ENCODE measurements at regions of chr1 and their contacts with region 1.

Region 1: GRCh38 chr1:119675349-119676345 is 27.6 kb upstream of the ZNF697 start:
- DNase-seq: peak; percentile 89
- ATAC-seq: peak; percentile 72
- H3K4me3 Mint-ChIP-seq: peak overlapping the region; percentile 52
- H3K27ac Mint-ChIP-seq: no peak overlapping the region
- H3K4me1 Mint-ChIP-seq: peaks cover 4% of the 10 kb centered on the region
- H3K27me3 Mint-ChIP-seq: peaks cover 4% of the 10 kb centered on the region
- CTCF ChIP-seq: peak; percentile 78

Region 2: DNA sequence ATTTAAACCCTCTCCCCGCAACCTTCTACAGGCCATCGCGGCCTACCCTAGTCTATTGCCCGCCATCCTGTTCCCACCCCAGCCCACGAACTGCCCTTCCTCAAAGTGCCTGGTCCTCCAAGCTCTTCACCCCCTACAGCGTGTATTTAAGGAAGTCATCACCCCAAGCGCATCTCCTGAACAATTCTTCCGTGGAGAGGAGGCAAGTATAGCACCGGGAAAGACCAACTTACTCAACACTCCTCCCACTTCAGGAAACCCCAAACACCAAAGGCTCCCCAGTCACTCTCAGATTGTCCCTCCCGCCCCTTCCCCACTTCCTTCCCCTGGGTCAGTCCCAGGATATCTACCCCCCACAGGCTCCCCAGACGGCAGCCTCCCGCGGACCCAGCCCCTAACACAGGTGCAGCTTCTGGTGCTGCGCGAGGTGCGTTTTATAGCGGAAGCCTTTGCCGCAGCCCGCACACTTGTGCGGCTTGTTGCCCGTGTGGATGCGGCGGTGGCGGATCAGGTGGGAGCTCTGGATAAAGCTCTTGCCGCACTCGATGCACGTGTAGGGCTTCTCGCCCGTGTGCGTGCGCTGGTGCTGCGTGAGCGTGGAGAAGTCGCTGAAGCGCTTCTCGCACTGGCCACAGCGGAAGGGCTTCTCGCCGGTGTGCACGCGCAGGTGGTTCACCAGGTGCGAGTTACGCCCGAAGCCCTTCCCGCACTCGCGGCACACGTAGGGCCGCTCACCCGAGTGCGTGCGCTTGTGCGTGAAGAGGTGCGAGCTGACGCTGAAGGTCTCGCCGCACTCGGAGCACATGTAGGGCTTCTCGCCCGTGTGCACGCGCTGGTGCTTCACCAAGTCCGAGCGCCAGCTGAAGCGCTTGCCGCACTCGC is 53.1 kb before region 1 on chr1:
- CTCF ChIA-PET with region 1: interaction called, 250 read pairs
- POLR2A ChIA-PET with region 1: no interaction called
- intact Hi-C with region 1: no loop called
- DNase-seq: no peak
- ATAC-seq: no peak
- H3K4me3 Mint-ChIP-seq: no peak overlapping the region
- H3K27ac Mint-ChIP-seq: no peak overlapping the region
- H3K4me1 Mint-ChIP-seq: no peaks in the 10 kb centered on the region
- H3K27me3 Mint-ChIP-seq: peaks cover 5% of the 10 kb centered on the region
- CTCF ChIP-seq: no peak

Region 3: GRCh38 chr1:119647734-119648619 is 27.7 kb before region 1 on chr1 and contains the start of gene ZNF697:
- CTCF ChIA-PET with region 1: interaction called, 23 read pairs
- POLR2A ChIA-PET with region 1: no interaction called
- intact Hi-C with region 1: no loop called
- DNase-seq: peak; percentile 43
- ATAC-seq: peak; percentile 79
- H3K4me3 Mint-ChIP-seq: peak within 1 kb of the TSS; percentile 70
- H3K27ac Mint-ChIP-seq: no peak within 1 kb of the TSS
- H3K4me1 Mint-ChIP-seq: peaks cover 24% of the 10 kb centered on the region
- H3K27me3 Mint-ChIP-seq: peaks cover 67% of the 10 kb centered on the region
- CTCF ChIP-seq: no peak
- total RNA-seq, gene ZNF697: 0.20 to 0.38 TPM

Region 4: GRCh38 chr1:119662034-119662437 is 13.6 kb before region 1 on chr1:
- CTCF ChIA-PET with region 1: interaction called, 44 read pairs
- POLR2A ChIA-PET with region 1: no interaction called
- intact Hi-C with region 1: no loop called
- DNase-seq: no peak
- ATAC-seq: no peak
- H3K4me3 Mint-ChIP-seq: no peak overlapping the region
- H3K27ac Mint-ChIP-seq: no peak overlapping the region
- H3K4me1 Mint-ChIP-seq: no peaks in the 10 kb centered on the region
- H3K27me3 Mint-ChIP-seq: peaks cover 13% of the 10 kb centered on the region
- CTCF ChIP-seq: no peak

Region 5: GRCh38 chr1:119773711-119774241 is 98.1 kb after region 1 on chr1:
- CTCF ChIA-PET with region 1: no interaction called
- POLR2A ChIA-PET with region 1: no interaction called
- intact Hi-C with region 1: no loop called
- DNase-seq: no peak
- ATAC-seq: no peak
- H3K4me3 Mint-ChIP-seq: no peak overlapping the region
- H3K27ac Mint-ChIP-seq: no peak overlapping the region
- H3K4me1 Mint-ChIP-seq: no peaks in the 10 kb centered on the region
- H3K27me3 Mint-ChIP-seq: peaks cover 4% of the 10 kb centered on the region
- CTCF ChIP-seq: no peak

Region 6: DNA sequence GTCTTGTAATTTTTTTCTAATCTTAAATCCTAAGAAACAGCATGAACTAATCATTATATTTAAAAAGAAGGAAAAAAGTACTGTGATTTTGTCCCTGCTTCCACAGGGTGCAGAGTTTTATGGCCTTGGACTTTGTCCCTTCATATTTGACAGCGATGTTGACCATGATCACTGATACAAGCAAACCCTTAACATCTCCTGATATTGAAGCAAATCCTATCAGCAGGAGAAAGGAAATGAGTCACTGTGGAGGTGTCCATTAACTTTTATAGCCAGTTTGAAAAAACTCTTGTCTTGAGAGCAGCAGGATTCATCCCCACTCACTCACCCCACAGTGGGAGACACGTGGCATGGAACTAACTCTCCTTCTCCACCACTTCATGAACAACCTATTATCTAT is 140.8 kb after region 1 on chr1:
- CTCF ChIA-PET with region 1: no interaction called
- POLR2A ChIA-PET with region 1: no interaction called
- intact Hi-C with region 1: no loop called
- DNase-seq: no peak
- ATAC-seq: no peak
- H3K4me3 Mint-ChIP-seq: no peak overlapping the region
- H3K27ac Mint-ChIP-seq: no peak overlapping the region
- H3K4me1 Mint-ChIP-seq: no peaks in the 10 kb centered on the region
- H3K27me3 Mint-ChIP-seq: peaks cover 6% of the 10 kb centered on the region
- CTCF ChIP-seq: no peak

Measured in activated CD8-positive, alpha-beta T cell treated with anti-CD3 and anti-CD28 coated beads for 36 hours (primary cell).